CD4-positive, alpha-beta memory T cell (primary cell): ENCODE measurements at regions of chr19 and their contacts with region 1.

Region 1: DNA sequence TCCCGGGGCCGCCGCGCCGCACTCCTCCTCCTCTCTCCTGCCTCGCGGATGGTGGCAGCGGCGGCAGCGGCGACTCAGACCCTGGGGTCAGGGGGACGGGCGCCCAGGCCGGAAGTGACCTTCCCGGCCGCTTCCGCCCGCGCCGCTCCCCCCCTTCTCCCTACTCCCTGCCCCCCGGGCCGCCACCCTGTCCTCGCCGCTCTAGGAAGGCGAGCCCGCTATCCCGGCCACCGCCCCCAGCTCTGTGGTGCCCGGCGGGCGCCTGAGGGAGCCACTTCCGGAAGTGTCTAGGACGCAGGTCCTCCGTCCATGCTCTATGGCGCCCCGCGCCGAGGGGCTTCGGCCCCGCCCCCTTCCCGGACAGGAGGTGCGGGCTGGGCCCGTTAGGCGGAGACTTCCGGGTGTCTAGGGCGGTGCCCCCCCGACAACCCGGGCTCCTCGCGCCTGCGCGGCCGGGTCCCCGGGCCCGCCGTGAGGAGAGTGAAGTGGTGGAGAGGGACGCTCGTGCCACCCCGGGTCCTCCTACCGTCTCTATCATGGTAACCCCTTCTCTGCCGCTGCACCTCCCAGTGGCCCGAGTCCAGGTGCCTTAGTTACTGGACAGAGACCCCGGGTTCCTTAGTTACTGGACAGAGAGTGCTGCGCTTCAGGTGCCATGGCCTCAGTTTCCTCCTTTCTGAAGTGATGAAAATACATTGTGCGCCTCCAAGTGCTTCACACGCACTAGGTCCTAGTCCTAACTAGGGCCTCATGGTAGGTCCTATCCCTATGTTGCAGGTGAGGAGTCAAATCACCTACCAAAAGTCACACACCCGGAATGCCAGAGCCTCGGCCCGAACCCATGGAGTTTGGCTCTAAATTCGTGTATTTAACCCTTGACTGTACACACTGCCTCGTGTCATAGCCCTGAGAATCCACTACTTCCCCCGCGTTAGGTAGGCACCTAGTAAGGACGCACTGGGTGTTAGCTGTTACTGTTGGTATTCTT is at the start of gene ZNF787:
- DNase-seq: peak; percentile 95 to 98 (median 98)
- H3K4me3 ChIP-seq: peak within 1 kb of the TSS; percentile 60 to 67
- H3K4me3 Mint-ChIP-seq: peak within 1 kb of the TSS; percentile 86 to 97 (median 88)
- H3K27ac ChIP-seq: peak within 1 kb of the TSS; percentile 92
- H3K27ac Mint-ChIP-seq: peak within 1 kb of the TSS; percentile 89 to 97 (median 96)
- H3K4me1 ChIP-seq: peaks cover 19% of the 10 kb centered on the region
- H3K4me1 Mint-ChIP-seq: peaks cover 21 to 49% (median 37%) of the 10 kb centered on the region in 4 donors
- H3K27me3 ChIP-seq: no peaks in the 10 kb centered on the region
- H3K27me3 Mint-ChIP-seq: no peaks in the 10 kb centered on the region
- total RNA-seq, gene ZNF787: 29.6 to 34.1 TPM

Region 2: DNA sequence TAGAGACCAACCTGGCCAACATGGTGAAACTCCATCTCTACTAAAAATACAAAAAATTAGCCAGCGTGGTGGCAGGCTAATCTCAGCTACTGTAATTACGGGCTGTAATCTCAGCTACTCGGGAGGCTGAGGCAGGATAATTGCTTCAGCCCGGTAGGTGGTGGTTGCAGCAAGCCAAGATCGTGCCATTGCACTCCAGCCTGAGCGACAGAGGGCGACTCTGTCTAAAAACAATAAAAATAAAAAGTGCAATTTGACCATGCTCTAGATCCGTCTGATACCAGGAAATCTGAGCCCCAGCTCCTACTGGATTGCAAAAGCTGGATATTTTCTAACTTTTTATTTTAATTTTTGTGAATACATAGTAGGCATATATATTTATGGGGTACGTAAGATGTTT is 154.9 kb before region 1 on chr19:
- CTCF ChIA-PET with region 1: no interaction called
- POLR2A ChIA-PET with region 1: no interaction called
- intact Hi-C with region 1: no loop called
- DNase-seq: no peak
- H3K4me3 ChIP-seq: no peak overlapping the region
- H3K4me3 Mint-ChIP-seq: no peak overlapping the region
- H3K27ac ChIP-seq: no peak overlapping the region
- H3K27ac Mint-ChIP-seq: no peak overlapping the region
- H3K4me1 ChIP-seq: no peaks in the 10 kb centered on the region
- H3K4me1 Mint-ChIP-seq: no peaks in the 10 kb centered on the region
- H3K27me3 ChIP-seq: no peaks in the 10 kb centered on the region
- H3K27me3 Mint-ChIP-seq: peaks cover 0 to 2% of the 10 kb centered on the region in 2 donors

Region 3: GRCh38 chr19:56090931-56091490 is 30.5 kb before region 1 on chr19:
- CTCF ChIA-PET with region 1: no interaction called
- POLR2A ChIA-PET with region 1: no interaction called
- intact Hi-C with region 1: no loop called
- DNase-seq: no peak
- H3K4me3 ChIP-seq: no peak overlapping the region
- H3K4me3 Mint-ChIP-seq: peak overlapping the region in 5 of 8 donors; percentile 13 to 73 (median 52)
- H3K27ac ChIP-seq: no peak overlapping the region
- H3K27ac Mint-ChIP-seq: peak overlapping the region in 4 of 7 donors; percentile 7 to 92 (median 56)
- H3K4me1 ChIP-seq: peaks cover 5% of the 10 kb centered on the region
- H3K4me1 Mint-ChIP-seq: peaks cover 3 to 20% (median 16%) of the 10 kb centered on the region in 4 donors
- H3K27me3 ChIP-seq: no peaks in the 10 kb centered on the region
- H3K27me3 Mint-ChIP-seq: no peaks in the 10 kb centered on the region

Region 4: DNA sequence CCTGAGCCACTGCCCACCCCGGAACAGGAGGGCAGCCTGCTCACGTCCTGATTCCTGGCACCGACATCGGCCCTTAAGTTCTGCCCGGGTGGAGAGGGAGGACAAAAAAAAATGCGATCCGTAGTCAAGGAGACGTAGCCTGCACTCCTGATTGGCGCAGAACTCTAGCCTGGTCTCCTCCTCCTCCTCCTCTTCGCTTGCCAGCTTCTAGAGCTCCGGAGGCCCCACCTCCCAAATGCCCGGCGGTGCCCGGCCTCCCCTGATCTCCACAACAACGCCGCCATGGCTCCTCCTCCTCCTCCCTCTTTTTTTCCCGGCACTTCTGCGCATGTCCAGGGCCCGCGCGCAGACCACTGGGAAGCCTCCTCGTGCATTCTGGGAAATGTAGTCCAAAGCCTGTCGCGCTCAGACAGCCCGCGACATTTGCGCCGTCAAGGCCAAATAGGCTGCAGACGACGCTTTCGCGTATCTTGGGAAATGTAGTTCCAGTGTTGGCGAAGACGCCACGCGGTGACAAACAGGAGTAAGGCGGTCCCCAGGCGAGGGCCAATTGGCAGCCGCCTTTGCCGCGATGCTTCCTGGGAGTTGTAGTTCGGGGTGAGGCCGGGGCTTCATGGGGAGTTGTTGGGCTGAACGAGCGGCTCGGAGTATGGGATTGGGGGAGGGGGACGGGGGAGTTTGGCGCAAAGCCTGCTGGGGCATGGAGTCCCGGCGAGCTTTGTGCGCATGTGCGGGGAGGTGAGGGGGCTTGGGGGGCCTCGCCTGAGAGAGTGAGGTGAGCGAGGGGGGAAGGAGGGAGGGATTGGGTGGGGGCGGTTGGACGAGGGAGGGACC is 19.3 kb after region 1 on chr19 and contains the start of gene ZNF444:
- CTCF ChIA-PET with region 1: interaction called, 3 read pairs
- POLR2A ChIA-PET with region 1: interaction called, 64 read pairs
- intact Hi-C with region 1: loop called (anchors 1 kb)
- DNase-seq: peak; percentile 99 to 100 (median 99)
- H3K4me3 ChIP-seq: peak within 1 kb of the TSS; percentile 71 to 96
- H3K4me3 Mint-ChIP-seq: peak within 1 kb of the TSS; percentile 87 to 98 (median 94)
- H3K27ac ChIP-seq: peak within 1 kb of the TSS; percentile 73
- H3K27ac Mint-ChIP-seq: peak within 1 kb of the TSS; percentile 89 to 98 (median 96)
- H3K4me1 ChIP-seq: peaks cover 22% of the 10 kb centered on the region
- H3K4me1 Mint-ChIP-seq: peaks cover 24 to 46% (median 33%) of the 10 kb centered on the region in 4 donors
- H3K27me3 ChIP-seq: no peaks in the 10 kb centered on the region
- H3K27me3 Mint-ChIP-seq: no peaks in the 10 kb centered on the region
- total RNA-seq, gene ZNF444: 33.2 to 42.8 TPM